Activated CD8-positive, alpha-beta T cell treated with anti-CD3 and anti-CD28 coated beads for 36 hours (primary cell): ENCODE measurements at regions of chr17 and their contacts with region 1.

Region 1: GRCh38 chr17:76408052-76408849 is 23.8 kb downstream of the SPHK1 start:
- DNase-seq: peak; percentile 81
- ATAC-seq: peak; percentile 81
- H3K4me3 Mint-ChIP-seq: no peak overlapping the region
- H3K27ac Mint-ChIP-seq: no peak overlapping the region
- H3K4me1 Mint-ChIP-seq: peaks cover 8% of the 10 kb centered on the region
- H3K27me3 Mint-ChIP-seq: no peaks in the 10 kb centered on the region
- CTCF ChIP-seq: peak; percentile 88

Region 2: DNA sequence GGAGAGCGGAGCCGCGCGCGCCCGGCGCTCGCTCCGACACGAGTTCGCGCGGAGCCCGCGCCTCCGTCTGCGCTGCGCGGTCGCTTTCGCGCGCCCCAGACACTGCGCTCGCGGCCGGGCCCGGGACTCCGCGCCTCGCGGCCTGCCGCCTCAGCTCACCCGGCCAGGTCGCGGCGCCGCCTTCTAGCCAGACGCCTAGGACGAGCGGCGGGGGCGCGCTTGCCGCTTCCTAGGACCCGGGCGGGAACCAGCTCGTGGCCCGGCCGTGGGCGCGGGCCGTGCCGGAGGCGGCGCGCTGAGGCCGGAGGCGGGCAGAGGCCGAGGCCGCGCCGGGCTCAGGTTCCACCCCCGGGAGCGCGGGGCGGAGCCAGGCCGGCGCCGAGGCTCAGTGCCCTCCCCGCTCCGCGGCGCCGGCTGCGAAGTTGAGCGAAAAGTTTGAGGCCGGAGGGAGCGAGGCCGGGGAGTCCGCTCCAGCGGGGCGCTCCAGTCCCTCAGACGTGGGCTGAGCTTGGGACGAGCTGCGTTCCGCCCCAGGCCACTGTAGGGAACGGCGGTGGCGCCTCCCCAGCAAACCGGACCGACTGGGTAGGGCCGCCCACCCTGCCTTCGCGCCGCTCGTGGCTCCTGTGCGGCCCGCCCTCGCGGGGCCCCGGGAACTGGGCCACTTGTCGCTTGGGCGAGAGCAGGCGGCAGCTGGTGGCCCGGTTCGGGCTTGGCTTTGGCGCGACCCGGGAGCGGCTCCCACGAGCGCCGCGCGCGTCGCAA is 23.8 kb before region 1 on chr17 and contains the start of gene SPHK1:
- CTCF ChIA-PET with region 1: interaction called, 19 read pairs
- POLR2A ChIA-PET with region 1: interaction called, 4 read pairs
- intact Hi-C with region 1: no loop called
- DNase-seq: peak; percentile 77
- ATAC-seq: peak; percentile 72
- H3K4me3 Mint-ChIP-seq: peak within 1 kb of the TSS; percentile 77
- H3K27ac Mint-ChIP-seq: peak within 1 kb of the TSS; percentile 93
- H3K4me1 Mint-ChIP-seq: peaks cover 3% of the 10 kb centered on the region
- H3K27me3 Mint-ChIP-seq: no peaks in the 10 kb centered on the region
- CTCF ChIP-seq: peak; percentile 15
- total RNA-seq, gene SPHK1: 15.7 to 17.7 TPM

Region 3: GRCh38 chr17:76427501-76428231 is 19.4 kb after region 1 on chr17:
- CTCF ChIA-PET with region 1: interaction called, 15 read pairs
- POLR2A ChIA-PET with region 1: no interaction called
- intact Hi-C with region 1: no loop called
- DNase-seq: no peak
- ATAC-seq: no peak
- H3K4me3 Mint-ChIP-seq: no peak overlapping the region
- H3K27ac Mint-ChIP-seq: no peak overlapping the region
- H3K4me1 Mint-ChIP-seq: peaks cover 11% of the 10 kb centered on the region
- H3K27me3 Mint-ChIP-seq: no peaks in the 10 kb centered on the region
- CTCF ChIP-seq: no peak

Region 4: DNA sequence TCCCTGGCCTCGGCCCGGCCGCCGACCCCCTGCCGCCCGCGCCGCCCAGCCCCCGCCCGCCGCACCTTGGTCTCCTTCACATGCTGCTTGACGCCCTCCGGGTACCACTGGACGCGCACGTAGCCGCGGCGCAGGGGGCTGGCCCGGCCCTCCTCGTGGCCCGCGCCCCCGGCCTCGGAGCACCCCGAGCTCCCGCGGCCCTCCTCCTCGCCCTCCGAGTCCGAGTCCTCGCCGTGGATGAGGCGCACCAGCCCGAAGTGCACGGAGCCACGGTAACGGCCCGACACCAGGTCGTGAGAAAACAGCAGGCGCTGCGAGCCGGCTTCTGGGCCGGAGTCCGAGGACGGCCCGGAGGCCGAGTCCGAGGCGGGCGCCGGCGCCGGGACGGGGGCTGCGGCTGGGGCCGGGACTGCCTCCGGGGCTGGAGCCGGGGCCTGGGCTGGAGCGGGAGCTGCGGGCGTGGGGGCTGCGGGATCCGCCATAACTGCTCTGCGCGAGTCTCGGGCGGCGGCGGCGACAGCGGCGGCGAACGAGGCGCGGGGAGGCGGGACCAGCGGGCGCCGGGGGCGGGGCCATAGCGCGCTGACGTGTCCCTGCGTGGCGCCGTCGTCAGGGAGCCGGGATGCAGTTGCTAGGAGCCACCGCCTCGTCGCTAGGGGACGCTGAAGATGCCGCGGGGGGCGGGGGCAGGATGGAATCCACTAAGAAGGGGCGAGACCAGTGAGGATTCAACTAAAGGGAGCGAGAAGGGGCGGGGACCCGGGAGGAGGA is 44.6 kb after region 1 on chr17 and contains the start of gene UBE2O:
- CTCF ChIA-PET with region 1: interaction called, 11 read pairs
- POLR2A ChIA-PET with region 1: no interaction called
- intact Hi-C with region 1: no loop called
- DNase-seq: peak; percentile 93
- ATAC-seq: peak; percentile 97
- H3K4me3 Mint-ChIP-seq: peak within 1 kb of the TSS; percentile 90
- H3K27ac Mint-ChIP-seq: peak within 1 kb of the TSS; percentile 55
- H3K4me1 Mint-ChIP-seq: peaks cover 37% of the 10 kb centered on the region
- H3K27me3 Mint-ChIP-seq: no peaks in the 10 kb centered on the region
- CTCF ChIP-seq: peak; percentile 42
- total RNA-seq, gene UBE2O: 36.8 to 39.5 TPM

Region 5: DNA sequence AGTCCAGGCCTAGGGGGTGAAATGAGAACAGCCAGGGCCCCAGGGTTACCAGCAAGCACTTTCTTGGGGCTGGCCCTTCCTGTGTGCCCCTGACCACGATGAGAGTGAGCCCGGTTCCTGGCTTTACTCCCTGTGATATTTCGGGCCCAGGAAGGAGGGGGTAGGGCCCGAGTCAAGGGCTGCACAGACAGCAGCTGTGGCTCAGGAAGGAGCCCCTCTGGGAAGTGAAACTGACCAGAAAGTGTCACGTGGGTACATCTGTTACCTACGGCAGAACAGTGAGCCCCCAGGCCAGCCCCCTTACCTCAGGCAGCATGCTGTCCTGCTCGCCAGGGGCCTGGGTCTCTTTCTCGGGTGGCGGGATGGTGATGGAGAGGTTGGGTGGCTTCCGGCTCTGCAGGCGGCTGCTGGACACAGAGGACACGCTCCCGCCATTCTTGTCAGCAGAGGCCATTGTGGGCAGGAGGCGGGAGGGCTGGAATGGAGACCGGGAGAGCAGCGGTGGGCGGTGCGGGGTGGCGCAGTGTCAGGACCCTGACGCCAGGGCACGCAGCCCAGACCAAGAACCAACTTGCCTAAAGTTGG is 72.9 kb after region 1 on chr17:
- CTCF ChIA-PET with region 1: no interaction called
- POLR2A ChIA-PET with region 1: no interaction called
- intact Hi-C with region 1: no loop called
- DNase-seq: peak; percentile 19
- ATAC-seq: peak; percentile 52
- H3K4me3 Mint-ChIP-seq: no peak overlapping the region
- H3K27ac Mint-ChIP-seq: no peak overlapping the region
- H3K4me1 Mint-ChIP-seq: peaks cover 15% of the 10 kb centered on the region
- H3K27me3 Mint-ChIP-seq: no peaks in the 10 kb centered on the region
- CTCF ChIP-seq: no peak

Region 6: GRCh38 chr17:76506408-76507349 is 98.4 kb after region 1 on chr17:
- CTCF ChIA-PET with region 1: interaction called, 14 read pairs
- POLR2A ChIA-PET with region 1: interaction called, 3 read pairs
- intact Hi-C with region 1: loop called (anchors 5 kb)
- DNase-seq: peak; percentile 92
- ATAC-seq: peak; percentile 89
- H3K4me3 Mint-ChIP-seq: no peak overlapping the region
- H3K27ac Mint-ChIP-seq: no peak overlapping the region
- H3K4me1 Mint-ChIP-seq: peaks cover 15% of the 10 kb centered on the region
- H3K27me3 Mint-ChIP-seq: no peaks in the 10 kb centered on the region
- CTCF ChIP-seq: peak; percentile 82